H1 (cell line): ENCODE measurements at regions of chrX and their contacts with region 1.

Region 1: DNA sequence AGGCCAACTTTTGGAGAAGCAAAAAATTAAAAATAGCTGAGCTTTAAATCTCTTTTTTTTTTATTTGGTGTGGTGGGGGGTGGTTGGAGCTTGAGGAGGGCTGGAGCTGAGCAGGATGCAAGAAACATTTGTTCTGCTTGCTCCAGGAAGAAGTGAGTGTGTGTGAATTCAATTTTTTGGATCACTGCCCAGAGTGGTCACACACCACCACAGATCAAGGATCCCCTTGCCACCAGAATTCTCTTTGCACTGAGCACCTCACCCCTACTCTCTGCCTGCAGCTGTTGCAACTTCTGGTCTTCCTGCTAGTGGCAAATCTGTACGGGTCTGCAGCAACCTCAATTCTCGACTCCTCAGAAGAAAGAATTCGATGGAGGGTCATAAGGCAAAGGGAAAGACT is 19.9 kb upstream of the PLP1 start:
- DNase-seq: no peak
- H3K4me3 ChIP-seq: no peak overlapping the region
- H3K27ac ChIP-seq: no peak overlapping the region
- H3K4me1 ChIP-seq: peaks cover 0 to 5% (median 1%) of the 10 kb centered on the region in 4 experiments; a peak in 3 of 7 replicates
- H3K27me3 ChIP-seq: no peaks in the 10 kb centered on the region
- CTCF ChIP-seq: no peak
- EP300 ChIP-seq: no peak
- POLR2A ChIP-seq: no peak
- RAD21 ChIP-seq: no peak

Region 2: DNA sequence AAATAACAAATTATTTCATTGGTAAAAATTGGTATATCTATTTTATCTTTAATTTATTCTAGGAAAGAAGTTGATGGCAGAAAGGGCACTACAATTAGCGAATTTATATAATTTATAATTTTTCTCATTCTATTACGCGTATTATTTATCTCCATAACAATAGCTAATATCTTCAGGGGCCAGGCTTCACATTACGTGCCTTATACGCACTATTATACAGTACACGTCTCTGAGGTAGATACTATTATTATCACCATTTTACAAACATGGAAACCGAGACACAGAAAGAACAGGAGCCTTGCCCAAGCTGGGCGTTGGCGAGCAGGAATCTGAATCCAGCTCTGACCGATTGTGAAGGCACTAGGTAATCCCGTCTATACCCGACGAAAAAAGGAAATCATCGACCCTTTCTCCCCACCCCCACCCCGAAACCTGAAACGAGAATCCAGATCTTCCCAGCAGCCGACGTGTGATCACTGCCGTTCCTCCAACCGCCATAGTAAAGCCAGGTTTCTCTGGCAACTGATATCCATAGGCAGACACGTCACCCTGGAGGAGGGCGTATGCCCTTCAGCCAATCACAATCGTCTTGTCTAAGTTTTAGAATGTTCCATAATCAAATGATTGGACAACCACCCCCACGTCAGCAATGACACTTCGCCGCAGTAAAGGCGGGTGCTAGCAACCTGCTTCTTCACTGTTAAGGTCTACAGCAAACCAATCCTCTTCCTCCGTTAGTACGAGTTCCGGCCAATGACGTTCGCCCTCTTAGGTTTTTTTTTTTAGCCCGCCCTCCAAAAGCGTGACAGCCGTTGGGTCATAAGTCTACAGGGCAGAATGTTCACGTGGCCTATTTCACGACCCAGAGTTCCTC is 70.3 kb before region 1 on chrX and contains the start of gene MORF4L2:
- CTCF ChIA-PET with region 1: no interaction called
- POLR2A ChIA-PET with region 1: interaction called, 11 read pairs
- DNase-seq: peak; percentile 62 to 90
- H3K4me3 ChIP-seq: peak within 1 kb of the TSS; percentile 80 to 99 (median 86)
- H3K27ac ChIP-seq: peak within 1 kb of the TSS; percentile 93
- H3K4me1 ChIP-seq: peaks cover 0 to 2% (median 0%) of the 10 kb centered on the region in 4 experiments; a peak in 1 of 7 replicates
- H3K27me3 ChIP-seq: no peaks in the 10 kb centered on the region
- CTCF ChIP-seq: no peak
- EP300 ChIP-seq: peak in 1 of 2 experiments; percentile 69; a peak in 1 of 3 replicates
- POLR2A ChIP-seq: peak; percentile 83 to 97
- RAD21 ChIP-seq: no peak
- total RNA-seq, gene MORF4L2: 340 and 373 TPM in 2 replicates

Region 3: DNA sequence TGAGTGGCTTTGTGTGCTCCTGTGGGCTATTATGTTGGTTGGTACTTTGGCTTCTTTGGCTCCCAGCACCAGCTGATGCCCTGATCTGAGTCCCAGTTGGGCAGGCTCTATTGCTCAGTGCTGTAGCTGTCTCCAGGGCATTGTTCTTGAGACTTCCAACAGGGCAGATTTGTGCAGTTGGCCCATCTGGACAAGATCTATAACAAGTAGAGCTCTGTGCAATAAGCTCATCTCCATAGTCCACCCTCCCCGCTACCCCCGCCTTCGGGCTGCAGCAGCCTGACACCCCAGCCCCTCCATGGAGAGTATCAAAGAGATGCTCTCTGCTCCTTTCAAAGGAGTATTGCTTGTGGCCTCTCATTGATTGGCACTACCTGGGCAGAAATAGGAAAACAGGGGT is 51.9 kb before region 1 on chrX:
- CTCF ChIA-PET with region 1: interaction called, 3 read pairs
- POLR2A ChIA-PET with region 1: interaction called, 12 read pairs
- DNase-seq: no peak
- H3K4me3 ChIP-seq: no peak overlapping the region
- H3K27ac ChIP-seq: no peak overlapping the region
- H3K4me1 ChIP-seq: no peaks in the 10 kb centered on the region
- H3K27me3 ChIP-seq: no peaks in the 10 kb centered on the region
- CTCF ChIP-seq: no peak
- EP300 ChIP-seq: no peak
- POLR2A ChIP-seq: no peak
- RAD21 ChIP-seq: no peak

Region 4: GRCh38 chrX:103711533-103712369 is 45.0 kb before region 1 on chrX:
- CTCF ChIA-PET with region 1: interaction called, 33 read pairs
- POLR2A ChIA-PET with region 1: interaction called, 9 read pairs
- DNase-seq: peak in 1 of 2 experiments; percentile 78
- H3K4me3 ChIP-seq: no peak overlapping the region
- H3K27ac ChIP-seq: peak overlapping the region; percentile 62; the same call in 1 of the 2 replicates
- H3K4me1 ChIP-seq: peaks cover 0 to 6% (median 3%) of the 10 kb centered on the region in 4 experiments; a peak in 5 of 7 replicates
- H3K27me3 ChIP-seq: no peaks in the 10 kb centered on the region
- CTCF ChIP-seq: peak in 2 of 3 experiments; percentile 51 to 70; a peak in 3 of 4 replicates
- EP300 ChIP-seq: no peak
- POLR2A ChIP-seq: no peak
- RAD21 ChIP-seq: peak; percentile 61 to 70

Region 5: GRCh38 chrX:103730796-103731493 is 25.8 kb before region 1 on chrX:
- CTCF ChIA-PET with region 1: interaction called, 4 read pairs
- POLR2A ChIA-PET with region 1: interaction called, 26 read pairs
- DNase-seq: no peak
- H3K4me3 ChIP-seq: no peak overlapping the region
- H3K27ac ChIP-seq: no peak overlapping the region
- H3K4me1 ChIP-seq: peaks cover 7 to 22% (median 16%) of the 10 kb centered on the region in 4 experiments
- H3K27me3 ChIP-seq: no peaks in the 10 kb centered on the region; a peak in 1 of 7 replicates
- CTCF ChIP-seq: no peak
- EP300 ChIP-seq: no peak
- POLR2A ChIP-seq: no peak
- RAD21 ChIP-seq: no peak

Region 6: GRCh38 chrX:103741879-103742278 is 14.9 kb before region 1 on chrX:
- CTCF ChIA-PET with region 1: interaction called, 3 read pairs
- POLR2A ChIA-PET with region 1: interaction called, 24 read pairs
- DNase-seq: no peak
- H3K4me3 ChIP-seq: peak overlapping the region in 2 of 4 experiments; percentile 3 to 81; a peak in 3 of 8 replicates
- H3K27ac ChIP-seq: peak overlapping the region; percentile 81
- H3K4me1 ChIP-seq: peaks cover 2 to 16% (median 9%) of the 10 kb centered on the region in 4 experiments; a peak in 5 of 7 replicates
- H3K27me3 ChIP-seq: no peaks in the 10 kb centered on the region
- CTCF ChIP-seq: no peak
- EP300 ChIP-seq: no peak
- POLR2A ChIP-seq: no peak
- RAD21 ChIP-seq: no peak

Region 7: DNA sequence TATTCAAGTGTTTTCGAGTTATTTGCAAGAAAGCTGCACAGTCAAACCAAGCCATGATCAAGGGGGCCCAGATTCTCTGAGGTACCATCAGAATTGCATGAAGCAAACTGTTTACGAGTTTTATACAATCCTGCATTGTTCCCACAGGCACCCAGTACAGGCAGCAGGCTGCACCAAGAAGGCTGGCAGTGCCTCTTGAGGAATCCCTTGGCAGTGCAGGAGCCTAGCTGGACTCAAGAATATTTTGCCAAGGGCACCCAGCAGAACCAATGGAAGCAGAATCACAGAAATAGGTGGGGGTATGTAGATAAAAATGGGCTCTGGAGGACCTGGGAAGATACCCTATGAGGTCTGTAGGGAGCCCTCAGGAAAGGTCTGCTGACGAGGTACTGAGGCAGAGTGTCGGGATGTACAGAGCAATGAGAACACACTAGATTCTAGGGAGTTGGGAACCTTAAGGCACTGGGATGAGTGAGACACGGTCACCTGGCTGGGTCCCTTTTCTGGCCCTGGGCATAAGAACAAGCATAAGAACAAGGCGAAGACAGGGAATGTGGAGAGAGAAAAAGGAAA is 17.4 kb after region 1 on chrX:
- CTCF ChIA-PET with region 1: interaction called, 4 read pairs
- POLR2A ChIA-PET with region 1: interaction called, 13 read pairs
- DNase-seq: no peak
- H3K4me3 ChIP-seq: no peak overlapping the region
- H3K27ac ChIP-seq: no peak overlapping the region
- H3K4me1 ChIP-seq: no peaks in the 10 kb centered on the region; a peak in 2 of 7 replicates
- H3K27me3 ChIP-seq: no peaks in the 10 kb centered on the region
- CTCF ChIP-seq: peak; percentile 9 to 36 (median 29)
- EP300 ChIP-seq: no peak
- POLR2A ChIP-seq: no peak
- RAD21 ChIP-seq: peak; percentile 61 to 67

Region 8: DNA sequence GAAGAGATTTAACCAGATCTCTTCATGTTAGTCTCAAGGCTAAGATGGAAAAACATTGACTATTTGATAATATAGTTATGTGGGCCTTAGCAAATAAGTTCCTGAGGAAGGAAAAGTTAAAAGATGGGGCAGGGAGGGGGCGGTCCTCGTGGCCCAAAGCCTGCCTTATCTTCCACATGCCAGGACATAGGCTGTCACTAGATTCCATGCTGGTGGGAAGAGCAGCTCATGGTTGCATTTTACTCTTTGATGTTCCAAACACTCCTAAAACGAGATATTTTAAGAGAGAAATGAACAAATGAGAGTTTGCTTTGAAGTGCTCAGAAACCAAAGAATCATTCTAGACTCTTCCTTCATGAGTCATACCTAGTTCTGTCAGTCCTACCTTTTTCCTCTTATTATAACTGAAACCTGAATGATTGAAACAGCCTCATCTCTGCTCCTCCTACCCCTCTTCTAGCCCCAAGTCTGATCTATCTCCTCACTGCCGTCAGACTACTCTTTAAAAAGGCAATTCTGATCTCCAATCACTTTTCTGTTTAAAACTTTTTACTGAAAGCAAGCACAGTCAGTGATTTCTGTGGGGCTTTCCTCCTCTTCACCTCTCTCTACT is 50.2 kb after region 1 on chrX:
- CTCF ChIA-PET with region 1: no interaction called
- POLR2A ChIA-PET with region 1: no interaction called
- DNase-seq: no peak
- H3K4me3 ChIP-seq: no peak overlapping the region
- H3K27ac ChIP-seq: no peak overlapping the region
- H3K4me1 ChIP-seq: no peaks in the 10 kb centered on the region
- H3K27me3 ChIP-seq: no peaks in the 10 kb centered on the region
- CTCF ChIP-seq: no peak
- EP300 ChIP-seq: no peak
- POLR2A ChIP-seq: no peak
- RAD21 ChIP-seq: no peak